Activated naive CD4-positive, alpha-beta T cell treated with anti-CD3 and anti-CD28 coated beads for 36 hours (primary cell): ENCODE measurements at regions of chr21 and their contacts with region 1.

Region 1: GRCh38 chr21:30340441-30341241 is 3.1 kb upstream of the KRTAP27-1 start:
- DNase-seq: peak; percentile 48
- H3K4me3 Mint-ChIP-seq: no peak overlapping the region
- H3K27ac Mint-ChIP-seq: no peak overlapping the region
- H3K4me1 Mint-ChIP-seq: no peaks in the 10 kb centered on the region
- H3K27me3 Mint-ChIP-seq: peaks cover 9% of the 10 kb centered on the region

Region 2: GRCh38 chr21:30297476-30297875 is 43.2 kb before region 1 on chr21:
- CTCF ChIA-PET with region 1: no interaction called
- intact Hi-C with region 1: no loop called
- DNase-seq: no peak
- H3K4me3 Mint-ChIP-seq: no peak overlapping the region
- H3K27ac Mint-ChIP-seq: no peak overlapping the region
- H3K4me1 Mint-ChIP-seq: no peaks in the 10 kb centered on the region
- H3K27me3 Mint-ChIP-seq: peaks cover 6% of the 10 kb centered on the region

Region 3: DNA sequence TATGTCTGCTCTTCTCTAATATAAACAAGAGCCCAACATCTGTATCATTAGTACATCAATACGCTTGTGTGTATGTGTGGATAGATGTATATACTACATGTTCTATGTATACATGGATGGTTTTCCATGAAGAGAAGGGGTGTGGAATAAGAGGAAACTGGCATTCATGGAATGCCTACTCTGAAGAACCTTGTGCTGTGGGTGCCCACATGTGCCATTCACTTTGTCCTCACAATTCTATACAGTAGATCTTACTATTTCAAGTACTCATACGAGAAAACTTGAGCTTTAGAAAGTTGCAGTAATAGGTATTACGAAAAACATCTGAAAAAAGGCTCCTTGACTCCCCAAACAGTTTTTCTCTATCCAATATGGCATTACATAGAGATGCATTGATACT is 18.9 kb before region 1 on chr21:
- CTCF ChIA-PET with region 1: no interaction called
- intact Hi-C with region 1: no loop called
- DNase-seq: no peak
- H3K4me3 Mint-ChIP-seq: no peak overlapping the region
- H3K27ac Mint-ChIP-seq: no peak overlapping the region
- H3K4me1 Mint-ChIP-seq: no peaks in the 10 kb centered on the region
- H3K27me3 Mint-ChIP-seq: peaks cover 3% of the 10 kb centered on the region

Region 4: GRCh38 chr21:30434033-30434631 is 93.5 kb after region 1 on chr21:
- CTCF ChIA-PET with region 1: no interaction called
- intact Hi-C with region 1: loop called (anchors 2 kb)
- DNase-seq: peak; percentile 31
- H3K4me3 Mint-ChIP-seq: no peak overlapping the region
- H3K27ac Mint-ChIP-seq: no peak overlapping the region
- H3K4me1 Mint-ChIP-seq: no peaks in the 10 kb centered on the region
- H3K27me3 Mint-ChIP-seq: peaks cover 10% of the 10 kb centered on the region

Region 5: DNA sequence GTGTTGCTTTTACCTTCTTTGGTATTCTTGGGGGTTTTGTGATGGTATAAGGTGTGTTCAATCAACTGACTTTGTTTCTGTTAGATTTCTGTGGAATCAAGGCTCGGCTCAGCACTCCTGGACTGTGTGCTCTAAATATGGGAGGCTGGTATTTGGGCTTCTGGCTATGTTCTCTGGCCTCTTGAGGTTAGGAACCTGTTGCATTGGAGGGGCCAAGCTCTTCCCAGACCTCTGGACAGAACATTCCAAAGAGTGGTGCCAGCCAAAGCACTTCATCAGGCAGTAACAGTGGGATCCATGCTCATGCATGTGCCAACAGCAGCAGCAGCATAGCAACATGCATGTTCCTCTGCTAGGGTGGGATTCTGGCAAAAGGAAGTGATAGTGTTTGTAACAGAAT is 212.1 kb after region 1 on chr21:
- CTCF ChIA-PET with region 1: no interaction called
- intact Hi-C with region 1: no loop called
- DNase-seq: no peak
- H3K4me3 Mint-ChIP-seq: no peak overlapping the region
- H3K27ac Mint-ChIP-seq: no peak overlapping the region
- H3K4me1 Mint-ChIP-seq: no peaks in the 10 kb centered on the region
- H3K27me3 Mint-ChIP-seq: no peaks in the 10 kb centered on the region

Region 6: DNA sequence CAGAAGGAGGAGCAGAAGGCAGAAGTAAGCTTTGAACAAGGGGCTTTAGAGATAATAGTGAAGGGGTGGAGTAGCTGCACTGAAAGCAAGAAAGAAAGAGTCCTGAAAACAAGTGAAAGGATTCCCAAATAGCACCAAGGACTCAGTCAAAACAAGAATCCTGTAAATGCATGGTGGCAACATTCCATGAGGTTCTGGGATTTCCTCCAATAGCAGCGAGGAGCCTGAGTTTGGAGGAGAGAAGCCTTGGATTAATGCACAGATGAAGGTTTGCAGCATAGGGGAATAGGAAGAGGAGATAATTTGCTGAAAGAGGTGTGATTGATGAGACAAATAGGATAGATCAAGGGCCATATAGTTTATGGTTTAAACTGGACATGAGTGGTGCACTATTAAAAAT is 238.7 kb after region 1 on chr21:
- CTCF ChIA-PET with region 1: no interaction called
- intact Hi-C with region 1: no loop called
- DNase-seq: no peak
- H3K4me3 Mint-ChIP-seq: no peak overlapping the region
- H3K27ac Mint-ChIP-seq: no peak overlapping the region
- H3K4me1 Mint-ChIP-seq: no peaks in the 10 kb centered on the region
- H3K27me3 Mint-ChIP-seq: no peaks in the 10 kb centered on the region